ENCODE measurements at regions of chr18 and their contacts with region 1.

Region 1: GRCh38 chr18:32470713-32471633 is at the start of gene GAREM1:
- DNase-seq: peak; percentile 93 to 94
- ATAC-seq: peak; percentile 93 to 99 (median 97)
- H3K4me3 ChIP-seq: peak within 1 kb of the TSS; percentile 66 to 89 (median 78)
- H3K27ac ChIP-seq: peak within 1 kb of the TSS; percentile 72 to 84 (median 80)
- H3K4me1 ChIP-seq: peaks cover 3 to 40% (median 20%) of the 10 kb centered on the region in 9 donors
- H3K27me3 ChIP-seq: peaks cover 0 to 62% (median 7%) of the 10 kb centered on the region in 7 donors
- CTCF ChIP-seq: peak; percentile 59 to 95 (median 80)
- total RNA-seq, gene GAREM1: 8.6 to 26.1 (median 13.9) TPM

Region 2: GRCh38 chr18:32158108-32158624 is 312.8 kb before region 1 on chr18:
- intact Hi-C with region 1: loop called in 9 of 10 experiments (anchors 1 to 10 kb)
- DNase-seq: peak; percentile 63 to 77
- ATAC-seq: peak; percentile 90 to 98 (median 95)
- H3K4me3 ChIP-seq: peak overlapping the region in 7 of 10 donors; percentile 13 to 35 (median 25)
- H3K27ac ChIP-seq: no peak overlapping the region
- H3K4me1 ChIP-seq: peaks cover 0 to 12% (median 0%) of the 10 kb centered on the region in 9 donors
- H3K27me3 ChIP-seq: peaks cover 0 to 9% (median 0%) of the 10 kb centered on the region in 7 donors
- CTCF ChIP-seq: peak; percentile 68 to 90 (median 82)

Region 3: DNA sequence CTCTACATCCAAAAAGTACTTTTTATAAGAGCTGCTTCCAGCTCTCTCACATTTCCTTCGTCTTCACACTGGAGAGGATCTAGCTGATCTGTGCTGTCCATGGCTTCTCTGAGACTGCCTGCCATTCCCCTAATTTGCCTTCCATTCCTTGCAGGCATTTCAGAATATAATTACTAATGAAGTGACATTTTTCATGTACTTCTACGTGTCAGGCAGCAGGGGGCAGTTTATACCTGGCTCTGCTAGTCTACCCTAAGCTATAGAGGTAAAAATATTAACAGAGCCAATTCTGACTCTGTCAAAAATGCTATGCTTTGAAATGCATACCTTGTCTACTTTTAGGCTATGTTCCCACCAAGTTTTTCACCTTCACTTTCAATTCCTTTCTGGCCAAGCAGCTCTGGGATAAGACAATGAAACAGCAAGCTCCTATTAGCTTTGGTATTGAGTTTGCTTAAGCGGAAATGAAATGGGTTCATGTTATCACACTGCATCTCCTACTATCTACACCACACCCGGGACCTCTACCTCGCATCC is 199.2 kb before region 1 on chr18:
- intact Hi-C with region 1: loop called in 9 of 10 experiments (anchors 1 to 10 kb)
- DNase-seq: peak in 1 of 2 donors; percentile 25
- ATAC-seq: peak; percentile 50 to 76 (median 72)
- H3K4me3 ChIP-seq: no peak overlapping the region
- H3K27ac ChIP-seq: no peak overlapping the region
- H3K4me1 ChIP-seq: peaks cover 0 to 9% (median 5%) of the 10 kb centered on the region in 9 donors
- H3K27me3 ChIP-seq: no peaks in the 10 kb centered on the region
- CTCF ChIP-seq: peak; percentile 32 to 77 (median 71)

Region 4: DNA sequence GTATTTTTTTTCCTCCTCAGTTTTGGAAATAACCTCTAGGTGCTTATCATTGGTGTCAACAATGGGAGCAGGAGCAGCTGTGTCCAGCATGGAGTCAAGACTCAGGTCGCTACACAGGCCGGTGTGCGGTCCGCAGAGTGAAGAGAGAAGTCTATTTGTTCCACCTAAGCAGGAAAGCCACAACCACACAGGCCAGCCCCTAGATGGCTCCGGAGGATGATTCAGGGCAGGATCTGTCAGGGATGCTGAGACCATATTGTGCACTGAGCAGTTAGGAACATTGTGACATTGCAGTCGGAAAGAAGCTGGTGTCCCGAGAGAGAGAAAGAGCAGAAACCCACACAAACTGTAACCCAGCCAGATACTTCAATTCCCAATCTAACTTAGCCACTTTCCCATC is 137.2 kb before region 1 on chr18:
- intact Hi-C with region 1: loop called in 1 of 10 experiments (anchors 5 kb)
- DNase-seq: no peak
- ATAC-seq: peak in 7 of 8 donors; percentile 55 to 80 (median 77)
- H3K4me3 ChIP-seq: no peak overlapping the region
- H3K27ac ChIP-seq: no peak overlapping the region
- H3K4me1 ChIP-seq: peaks cover 0 to 49% (median 20%) of the 10 kb centered on the region in 9 donors
- H3K27me3 ChIP-seq: no peaks in the 10 kb centered on the region
- CTCF ChIP-seq: peak in 4 of 9 donors; percentile 16 to 40 (median 28)

Region 5: GRCh38 chr18:32373995-32374394 is 97.0 kb before region 1 on chr18:
- intact Hi-C with region 1: loop called in 2 of 10 experiments (anchors 10 kb)
- DNase-seq: peak in 1 of 2 donors; percentile 48
- ATAC-seq: peak in 6 of 8 donors; percentile 17 to 72 (median 50)
- H3K4me3 ChIP-seq: no peak overlapping the region
- H3K27ac ChIP-seq: peak overlapping the region in 3 of 10 donors; percentile 6 to 53 (median 52)
- H3K4me1 ChIP-seq: peaks cover 0 to 50% (median 21%) of the 10 kb centered on the region in 9 donors
- H3K27me3 ChIP-seq: no peaks in the 10 kb centered on the region
- CTCF ChIP-seq: no peak

Region 6: GRCh38 chr18:32424696-32425095 is 46.3 kb before region 1 on chr18:
- intact Hi-C with region 1: loop called in 1 of 10 experiments (anchors 5 kb)
- DNase-seq: no peak
- ATAC-seq: peak in 7 of 8 donors; percentile 55 to 88 (median 76)
- H3K4me3 ChIP-seq: no peak overlapping the region
- H3K27ac ChIP-seq: peak overlapping the region in 8 of 10 donors; percentile 23 to 59 (median 34)
- H3K4me1 ChIP-seq: peaks cover 0 to 90% (median 55%) of the 10 kb centered on the region in 9 donors
- H3K27me3 ChIP-seq: no peaks in the 10 kb centered on the region
- CTCF ChIP-seq: no peak

Measured in heart right ventricle (tissue), 16 donors.